Mammary epithelial cell (primary cell): ENCODE measurements at regions of chr6 and their contacts with region 1.

Region 1: GRCh38 chr6:77466055-77466450 is 2.8 kb upstream of the HTR1B start:
- DNase-seq: peak; percentile 61
- H3K4me3 ChIP-seq: peak overlapping the region; percentile 53 to 74 (median 60)
- H3K27ac ChIP-seq: no peak overlapping the region
- H3K4me1 ChIP-seq: peaks cover 32% of the 10 kb centered on the region
- H3K27me3 ChIP-seq: no peaks in the 10 kb centered on the region
- CTCF ChIP-seq: peak; percentile 74 to 92

Region 2: GRCh38 chr6:76982476-76983199 is 483.4 kb before region 1 on chr6:
- CTCF ChIA-PET with region 1: interaction called, 10 read pairs
- dilution Hi-C with region 1: no loop called
- in situ Hi-C with region 1: no loop called
- intact Hi-C with region 1: no loop called
- DNase-seq: no peak
- H3K4me3 ChIP-seq: no peak overlapping the region
- H3K27ac ChIP-seq: no peak overlapping the region
- H3K4me1 ChIP-seq: no peaks in the 10 kb centered on the region
- H3K27me3 ChIP-seq: no peaks in the 10 kb centered on the region
- CTCF ChIP-seq: no peak

Region 3: GRCh38 chr6:77573843-77574242 is 107.8 kb after region 1 on chr6:
- CTCF ChIA-PET with region 1: no interaction called
- dilution Hi-C with region 1: no loop called
- in situ Hi-C with region 1: no loop called
- intact Hi-C with region 1: loop called (anchors 10 kb)
- DNase-seq: no peak
- H3K4me3 ChIP-seq: no peak overlapping the region
- H3K27ac ChIP-seq: no peak overlapping the region
- H3K4me1 ChIP-seq: no peaks in the 10 kb centered on the region
- H3K27me3 ChIP-seq: no peaks in the 10 kb centered on the region
- CTCF ChIP-seq: no peak

Region 4: GRCh38 chr6:77740380-77740779 is 274.3 kb after region 1 on chr6:
- CTCF ChIA-PET with region 1: no interaction called
- dilution Hi-C with region 1: no loop called
- in situ Hi-C with region 1: no loop called
- intact Hi-C with region 1: loop called (anchors 1 kb)
- DNase-seq: peak; percentile 5
- H3K4me3 ChIP-seq: no peak overlapping the region
- H3K27ac ChIP-seq: no peak overlapping the region
- H3K4me1 ChIP-seq: no peaks in the 10 kb centered on the region
- H3K27me3 ChIP-seq: no peaks in the 10 kb centered on the region
- CTCF ChIP-seq: peak; percentile 52 to 55

Region 5: DNA sequence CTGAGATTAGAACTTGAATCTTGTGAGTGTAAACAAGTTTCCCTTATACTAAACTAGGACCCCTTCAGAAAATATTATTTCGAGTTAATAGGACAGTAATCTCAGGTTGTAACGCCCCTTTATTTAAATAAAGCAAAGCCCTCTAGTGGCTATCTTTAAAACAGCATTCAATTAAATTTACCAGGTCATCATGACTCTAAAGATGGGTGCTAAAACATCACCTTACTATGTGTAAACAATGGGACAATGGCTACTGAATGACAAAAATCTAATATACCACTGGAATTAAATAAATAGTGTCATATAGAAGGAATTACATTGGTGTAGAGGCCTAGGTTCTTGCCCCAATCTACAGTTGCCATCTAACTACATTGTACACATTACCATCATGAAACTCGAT is 1145.9 kb after region 1 on chr6:
- CTCF ChIA-PET with region 1: no interaction called
- dilution Hi-C with region 1: no loop called
- in situ Hi-C with region 1: no loop called
- intact Hi-C with region 1: loop called (anchors 10 kb)
- DNase-seq: no peak
- H3K4me3 ChIP-seq: no peak overlapping the region
- H3K27ac ChIP-seq: no peak overlapping the region
- H3K4me1 ChIP-seq: peaks cover 19% of the 10 kb centered on the region
- H3K27me3 ChIP-seq: no peaks in the 10 kb centered on the region
- CTCF ChIP-seq: peak; percentile 57 to 61

Region 6: GRCh38 chr6:78810146-78810545 is 1344.1 kb after region 1 on chr6:
- CTCF ChIA-PET with region 1: interaction called, 6 read pairs
- dilution Hi-C with region 1: no loop called
- in situ Hi-C with region 1: loop called in 1 of 2 experiments (anchors 10 kb)
- intact Hi-C with region 1: loop called (anchors 1 kb)
- DNase-seq: peak; percentile 77
- H3K4me3 ChIP-seq: no peak overlapping the region
- H3K27ac ChIP-seq: peak overlapping the region; percentile 85
- H3K4me1 ChIP-seq: peaks cover 23% of the 10 kb centered on the region
- H3K27me3 ChIP-seq: no peaks in the 10 kb centered on the region
- CTCF ChIP-seq: peak; percentile 76 to 80